Psoas muscle (tissue), 8 donors: ENCODE measurements at regions of chr17 and their contacts with region 1.

Region 1: GRCh38 chr17:81387100-81388090 is 7.9 kb upstream of the BAHCC1 start:
- DNase-seq: peak in 1 of 2 donors; percentile 82
- ATAC-seq: peak; percentile 27 to 59 (median 42)
- H3K4me3 ChIP-seq: peak overlapping the region; percentile 95
- H3K27ac ChIP-seq: peak overlapping the region; percentile 99
- H3K4me1 ChIP-seq: peaks cover 33% of the 10 kb centered on the region
- H3K27me3 ChIP-seq: no peaks in the 10 kb centered on the region
- CTCF ChIP-seq: no peak

Region 2: GRCh38 chr17:81309070-81309905 is 78.1 kb before region 1 on chr17:
- intact Hi-C with region 1: loop called in 1 of 2 experiments (anchors 5 kb)
- DNase-seq: peak; percentile 96
- ATAC-seq: peak; percentile 88 to 95 (median 90)
- H3K4me3 ChIP-seq: peak overlapping the region; percentile 61
- H3K27ac ChIP-seq: peak overlapping the region; percentile 80
- H3K4me1 ChIP-seq: peaks cover 13% of the 10 kb centered on the region
- H3K27me3 ChIP-seq: no peaks in the 10 kb centered on the region
- CTCF ChIP-seq: peak; percentile 56

Region 3: DNA sequence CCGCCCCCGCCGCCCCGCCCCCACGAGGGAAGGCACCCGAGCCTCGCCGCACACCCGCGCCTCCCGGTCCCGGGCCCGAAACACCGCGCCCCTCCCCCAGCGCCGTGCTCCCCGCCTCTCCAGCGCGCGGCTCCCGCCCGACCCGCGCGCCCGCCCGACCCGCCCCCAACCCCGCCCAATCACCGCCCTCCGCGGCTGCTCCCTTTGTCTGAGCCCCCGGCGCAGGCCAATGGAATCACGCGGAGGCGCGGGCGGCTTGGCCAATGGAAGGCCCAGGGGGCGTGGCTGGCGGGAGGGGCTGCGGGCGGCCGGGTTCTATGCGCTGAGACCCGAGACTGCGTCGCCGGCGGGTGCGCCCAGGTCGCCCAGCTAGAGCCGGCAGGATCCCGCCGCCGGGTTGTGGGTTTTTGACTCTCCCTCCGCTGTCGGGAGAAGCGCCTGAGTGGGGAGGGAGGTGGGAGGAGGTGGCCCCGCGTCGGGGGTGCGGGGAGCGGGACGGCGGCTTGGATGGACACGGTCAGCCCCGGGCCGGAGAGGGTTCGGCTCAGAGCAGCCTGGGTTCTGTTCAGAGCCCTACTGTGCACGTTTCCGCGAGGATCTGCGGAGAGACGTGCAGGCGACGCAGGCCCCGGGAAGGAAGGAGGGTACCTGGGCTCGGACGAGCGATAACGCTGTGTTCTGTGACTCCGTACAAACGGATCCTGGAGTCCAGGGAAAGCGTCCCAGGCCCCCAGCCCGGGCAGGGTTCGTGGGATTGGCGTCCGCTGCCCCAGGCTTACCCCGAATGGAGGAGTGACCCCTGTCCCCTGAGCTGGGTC is 41.1 kb before region 1 on chr17:
- intact Hi-C with region 1: loop called (anchors 1 to 2 kb)
- DNase-seq: peak; percentile 99
- ATAC-seq: peak; percentile 72 to 79 (median 77)
- H3K4me3 ChIP-seq: peak overlapping the region; percentile 79
- H3K27ac ChIP-seq: peak overlapping the region; percentile 95
- H3K4me1 ChIP-seq: peaks cover 12% of the 10 kb centered on the region
- H3K27me3 ChIP-seq: no peaks in the 10 kb centered on the region
- CTCF ChIP-seq: no peak